ENCODE measurements at regions of chr17 and their contacts with region 1.

Region 1: GRCh38 chr17:14069251-14070021 is at the start of gene COX10:
- DNase-seq: peak; percentile 80 to 84
- ATAC-seq: peak; percentile 97 to 98
- H3K4me3 ChIP-seq: peak within 1 kb of the TSS; percentile 92 to 99 (median 97)
- H3K27ac ChIP-seq: peak within 1 kb of the TSS; percentile 89 to 98 (median 95)
- H3K4me1 ChIP-seq: peaks cover 21 to 23% of the 10 kb centered on the region in 2 donors
- H3K27me3 ChIP-seq: no peaks in the 10 kb centered on the region
- CTCF ChIP-seq: no peak
- POLR2A ChIP-seq: peak; percentile 84 to 88
- total RNA-seq, gene COX10: 70.6 to 123 (median 87.3) TPM

Region 2: GRCh38 chr17:14300575-14301278 is 231.3 kb after region 1 on chr17 and contains the start of gene HS3ST3B1:
- in situ Hi-C with region 1: no loop called
- intact Hi-C with region 1: loop called (anchors 1 kb)
- DNase-seq: peak; percentile 96 to 98
- ATAC-seq: peak; percentile 90 to 95
- H3K4me3 ChIP-seq: peak within 1 kb of the TSS; percentile 57 to 74 (median 70)
- H3K27ac ChIP-seq: peak within 1 kb of the TSS; percentile 64 to 80 (median 70)
- H3K4me1 ChIP-seq: peaks cover 35 to 44% of the 10 kb centered on the region in 2 donors
- H3K27me3 ChIP-seq: peaks cover 60 to 89% (median 85%) of the 10 kb centered on the region in 3 donors
- CTCF ChIP-seq: peak in 1 of 5 experiments; percentile 14
- POLR2A ChIP-seq: peak; percentile 77 to 86
- total RNA-seq, gene HS3ST3B1: 0.10 to 4.0 (median 0.82) TPM

Measured in gastrocnemius medialis (tissue), 4 donors.